Cardiac septum (tissue), 1 donor: ENCODE measurements at regions of chr6 and their contacts with region 1.

Region 1: DNA sequence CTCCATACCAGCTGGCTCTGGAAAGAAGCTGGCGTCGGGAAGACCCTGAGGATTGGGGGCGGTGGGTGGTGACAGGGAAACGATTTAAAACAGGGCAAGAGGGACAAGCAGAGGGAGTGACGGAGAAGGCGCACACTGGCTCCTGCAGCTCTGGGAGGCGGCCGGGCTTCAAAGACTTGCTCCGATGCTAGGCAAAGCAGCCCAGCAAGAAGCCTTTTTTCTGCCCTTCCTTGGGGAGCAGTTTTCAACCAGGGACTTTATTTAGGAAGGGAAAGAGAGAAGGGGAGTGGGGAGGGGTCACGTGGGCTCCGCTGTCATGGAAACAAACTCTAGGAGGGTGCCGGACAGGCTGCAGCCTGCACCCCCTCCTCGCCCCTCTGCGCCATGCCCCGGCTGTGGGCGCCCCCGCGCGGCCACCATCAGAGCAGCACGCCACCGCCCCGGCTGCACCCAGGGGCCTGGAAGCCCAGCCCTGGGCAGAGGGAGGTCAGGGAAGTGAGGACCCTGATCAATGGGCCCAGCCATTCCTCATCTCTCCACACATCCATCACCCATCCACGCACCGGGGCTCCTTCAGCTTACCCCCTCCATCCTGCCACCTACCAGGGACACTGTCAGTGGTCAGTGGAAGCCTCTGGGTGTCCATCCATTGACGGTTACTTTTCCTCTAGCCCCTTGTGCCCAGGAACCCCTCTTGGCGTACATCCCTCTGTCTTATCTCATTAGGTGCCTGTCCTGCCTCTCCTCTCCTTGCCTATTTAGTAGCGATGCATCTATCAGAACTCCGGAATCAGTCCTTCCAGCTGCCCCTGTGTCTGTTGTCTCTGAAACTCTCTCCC is 66.6 kb upstream of the CCDC167 start:
- DNase-seq: no peak

Region 2: DNA sequence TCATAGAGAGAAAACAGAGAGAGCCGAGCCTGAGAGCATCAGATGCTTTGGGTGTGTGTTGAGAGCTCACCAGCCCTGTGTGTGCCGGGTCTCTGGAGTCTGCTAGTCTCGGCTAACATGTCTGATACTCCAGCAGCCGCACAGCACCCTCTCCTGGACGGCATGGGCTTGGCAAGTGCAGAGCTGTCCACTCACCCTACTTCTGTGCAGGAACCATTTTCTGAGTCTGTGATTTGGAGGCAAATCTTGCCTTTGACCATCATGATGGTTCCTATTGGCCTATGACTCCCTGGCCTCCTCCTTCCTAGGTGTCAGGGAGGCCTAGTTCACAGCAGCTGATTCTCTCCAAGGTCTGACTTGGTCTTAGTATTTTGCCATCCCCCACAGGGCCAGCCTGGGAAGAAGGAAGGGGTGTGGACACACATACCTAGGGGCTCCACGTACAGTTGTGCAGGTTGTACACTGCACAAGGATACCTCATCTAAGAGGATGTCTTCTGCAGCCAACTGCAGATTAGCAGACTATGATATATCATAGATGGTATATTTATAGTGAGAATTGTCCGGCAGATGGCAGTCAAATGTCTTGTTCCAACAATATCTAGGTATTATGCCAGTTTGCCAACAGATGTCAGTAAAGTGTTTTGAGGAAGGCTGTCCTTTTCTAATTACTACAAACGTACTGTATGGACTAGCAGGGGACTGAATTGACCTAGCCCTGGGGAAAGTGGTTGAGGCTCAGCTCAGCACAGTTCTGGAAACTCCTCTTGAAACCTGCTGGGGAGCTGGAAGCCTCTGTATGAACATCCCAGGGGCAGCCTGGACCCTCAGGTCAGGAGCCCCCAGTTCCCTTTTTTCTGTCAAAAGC is 547.9 kb before region 1 on chr6:
- intact Hi-C with region 1: no loop called
- DNase-seq: peak; percentile 94

Region 3: GRCh38 chr6:37365762-37366161 is 200.6 kb before region 1 on chr6:
- intact Hi-C with region 1: loop called (anchors 5 kb)
- DNase-seq: no peak

Region 4: GRCh38 chr6:37381579-37381978 is 184.8 kb before region 1 on chr6:
- intact Hi-C with region 1: loop called (anchors 5 kb)
- DNase-seq: no peak

Region 5: GRCh38 chr6:37483917-37484785 is 82.2 kb before region 1 on chr6:
- intact Hi-C with region 1: loop called (anchors 5 kb)
- DNase-seq: no peak

Region 6: GRCh38 chr6:37582306-37582705 is 16.0 kb after region 1 on chr6:
- intact Hi-C with region 1: no loop called
- DNase-seq: no peak

Region 7: DNA sequence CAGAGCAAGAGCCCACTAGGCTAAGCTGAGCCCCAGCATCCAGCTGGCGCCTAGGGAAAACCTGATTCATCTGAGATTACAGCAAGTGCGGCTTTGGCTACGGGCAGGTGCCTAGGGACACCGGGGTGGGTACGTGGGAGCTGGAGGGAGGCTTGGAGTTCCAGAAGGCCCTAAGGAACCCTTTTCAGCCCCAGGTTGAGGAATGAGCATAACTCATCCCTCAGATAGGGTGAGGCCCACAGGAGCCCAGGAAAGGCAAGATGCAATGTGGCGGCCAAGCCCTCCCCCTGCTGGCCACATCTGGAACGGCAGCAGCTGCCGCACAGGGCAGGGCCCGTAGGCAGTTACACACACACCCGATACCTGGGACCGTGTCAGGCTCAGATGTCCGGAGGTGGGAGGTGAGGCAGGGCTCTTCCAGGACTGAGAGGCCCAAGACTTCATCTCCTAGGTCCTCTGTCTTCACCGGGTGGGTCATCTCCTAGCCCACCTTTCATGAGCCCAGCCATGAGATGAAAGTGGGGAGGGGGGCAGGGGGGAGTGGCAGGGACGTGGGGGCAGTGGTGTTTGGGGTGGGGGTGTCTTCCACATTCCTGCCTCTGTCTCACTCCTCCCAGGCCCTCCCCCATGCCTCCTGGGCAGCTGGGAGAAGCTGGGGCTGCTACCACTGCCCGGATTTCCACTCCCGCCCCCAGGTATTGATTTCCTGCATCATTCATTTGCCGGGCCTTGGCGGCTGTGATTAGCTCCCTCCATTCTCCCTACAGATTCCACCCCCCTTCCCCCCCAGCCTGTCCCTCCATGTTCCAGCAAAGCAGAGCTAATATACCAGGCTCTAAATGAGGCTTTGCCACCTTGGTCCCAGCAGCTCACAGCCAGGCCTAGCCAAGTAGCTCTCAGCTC is 125.8 kb after region 1 on chr6:
- intact Hi-C with region 1: loop called (anchors 5 kb)
- DNase-seq: peak; percentile 88